Vagina (tissue), 2 donors: ENCODE measurements at regions of chr3 and their contacts with region 1.

Region 1: DNA sequence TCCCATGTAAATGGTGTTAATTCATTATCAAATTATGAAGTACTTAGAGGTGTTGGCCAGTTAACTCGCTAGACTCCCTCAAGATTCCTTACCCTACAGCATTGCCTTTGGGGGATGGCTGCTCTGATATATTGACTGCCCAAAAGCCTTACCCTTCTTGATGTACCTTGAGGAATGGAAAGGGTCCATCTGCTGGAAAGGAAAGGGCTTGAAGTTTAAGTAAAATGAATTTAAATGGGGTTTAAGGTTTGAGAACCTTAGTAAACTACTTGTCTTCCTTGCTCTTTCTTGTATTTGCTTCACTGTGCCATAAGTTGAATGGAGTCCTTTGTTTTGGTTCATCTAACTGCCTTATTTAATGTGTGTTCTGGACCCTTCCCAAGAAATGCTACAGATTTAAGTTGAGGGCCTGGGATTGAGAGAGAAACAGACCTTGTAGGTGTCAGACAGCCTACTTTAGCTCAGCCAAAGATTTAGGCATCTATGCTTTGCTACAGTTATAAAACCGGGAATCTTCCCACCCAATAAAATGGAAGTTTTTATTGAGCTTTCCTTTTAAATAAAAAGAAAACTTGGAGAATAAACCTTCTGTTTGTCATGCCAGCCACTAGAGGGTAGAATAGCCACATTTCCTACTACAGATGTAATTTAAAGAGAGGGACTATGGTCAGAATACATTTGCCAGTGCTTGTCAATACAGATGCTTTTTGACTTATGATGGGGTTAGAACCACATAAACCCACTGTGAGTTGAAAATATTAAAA is 25.3 kb downstream of the CMSS1 start:
- DNase-seq: no peak
- H3K4me3 ChIP-seq: no peak overlapping the region
- H3K27ac ChIP-seq: peak overlapping the region; percentile 49
- H3K4me1 ChIP-seq: peaks cover 27% of the 10 kb centered on the region
- H3K27me3 ChIP-seq: no peaks in the 10 kb centered on the region
- CTCF ChIP-seq: peak; percentile 23 to 73 (median 57)
- POLR2A ChIP-seq: no peak

Region 2: DNA sequence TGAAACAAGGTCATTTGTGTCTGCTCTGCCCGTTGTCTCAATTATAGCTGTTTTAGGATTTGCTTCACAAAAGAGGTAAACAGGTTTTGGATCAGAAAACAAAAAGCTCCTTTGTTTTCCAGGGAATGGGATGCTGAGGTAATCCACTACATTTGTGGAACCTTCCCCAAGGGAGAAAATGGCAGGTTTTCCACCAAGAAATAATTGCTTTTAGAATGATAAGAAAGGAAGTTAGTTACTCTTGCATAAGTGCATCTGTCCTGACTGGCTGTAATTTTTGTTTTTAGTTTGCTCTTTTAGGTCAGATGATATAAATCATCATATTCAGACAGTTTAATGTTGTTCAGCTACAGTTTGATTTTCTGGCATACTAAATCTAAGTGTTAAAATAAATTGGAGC is 403.1 kb before region 1 on chr3:
- intact Hi-C with region 1: no loop called
- DNase-seq: no peak
- H3K4me3 ChIP-seq: no peak overlapping the region
- H3K27ac ChIP-seq: no peak overlapping the region
- H3K4me1 ChIP-seq: no peaks in the 10 kb centered on the region
- H3K27me3 ChIP-seq: no peaks in the 10 kb centered on the region
- CTCF ChIP-seq: no peak
- POLR2A ChIP-seq: no peak

Region 3: DNA sequence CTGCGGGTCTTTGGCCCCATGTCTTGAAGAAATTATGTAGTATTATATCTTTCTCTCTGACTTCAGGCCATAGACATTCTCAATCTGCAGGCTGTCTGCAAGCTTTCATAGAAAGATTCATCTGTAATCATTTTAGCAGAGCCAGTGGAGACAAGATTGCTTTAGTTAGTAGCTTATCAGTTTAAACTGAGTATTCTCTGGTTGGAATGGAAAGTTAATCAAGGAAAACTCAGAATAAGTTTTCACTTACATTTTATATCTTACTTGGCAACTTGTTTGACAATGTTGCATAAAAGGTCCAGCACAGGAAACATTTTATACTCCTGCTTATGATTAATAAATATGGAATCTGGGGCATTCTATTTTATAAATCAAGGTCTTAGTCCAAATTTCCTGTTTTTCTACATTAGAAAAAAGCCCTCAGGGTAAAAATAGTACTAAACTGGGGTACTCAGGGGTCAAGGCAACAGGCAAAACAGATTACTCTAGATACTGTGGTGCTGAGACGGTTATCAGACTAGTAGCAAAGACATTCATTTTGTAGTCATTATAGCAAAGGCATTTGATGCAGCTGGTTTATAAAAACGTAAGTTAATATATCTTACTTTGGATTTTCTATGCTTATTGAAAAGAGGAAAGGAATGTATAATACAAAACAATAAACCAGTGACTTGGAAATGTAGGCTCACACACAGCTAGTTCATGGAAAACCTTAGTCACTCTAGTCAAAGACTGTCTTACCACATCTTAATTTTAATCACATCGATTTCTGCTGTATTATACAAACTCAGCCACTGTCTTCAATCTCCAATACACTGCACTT is 316.5 kb after region 1 on chr3:
- intact Hi-C with region 1: loop called (anchors 10 kb)
- DNase-seq: no peak
- H3K4me3 ChIP-seq: no peak overlapping the region
- H3K27ac ChIP-seq: peak overlapping the region; percentile 10
- H3K4me1 ChIP-seq: peaks cover 21% of the 10 kb centered on the region
- H3K27me3 ChIP-seq: no peaks in the 10 kb centered on the region
- CTCF ChIP-seq: no peak
- POLR2A ChIP-seq: no peak